Thyroid gland (tissue), 4 donors: ENCODE measurements at regions of chr10 and their contacts with region 1.

Region 1: DNA sequence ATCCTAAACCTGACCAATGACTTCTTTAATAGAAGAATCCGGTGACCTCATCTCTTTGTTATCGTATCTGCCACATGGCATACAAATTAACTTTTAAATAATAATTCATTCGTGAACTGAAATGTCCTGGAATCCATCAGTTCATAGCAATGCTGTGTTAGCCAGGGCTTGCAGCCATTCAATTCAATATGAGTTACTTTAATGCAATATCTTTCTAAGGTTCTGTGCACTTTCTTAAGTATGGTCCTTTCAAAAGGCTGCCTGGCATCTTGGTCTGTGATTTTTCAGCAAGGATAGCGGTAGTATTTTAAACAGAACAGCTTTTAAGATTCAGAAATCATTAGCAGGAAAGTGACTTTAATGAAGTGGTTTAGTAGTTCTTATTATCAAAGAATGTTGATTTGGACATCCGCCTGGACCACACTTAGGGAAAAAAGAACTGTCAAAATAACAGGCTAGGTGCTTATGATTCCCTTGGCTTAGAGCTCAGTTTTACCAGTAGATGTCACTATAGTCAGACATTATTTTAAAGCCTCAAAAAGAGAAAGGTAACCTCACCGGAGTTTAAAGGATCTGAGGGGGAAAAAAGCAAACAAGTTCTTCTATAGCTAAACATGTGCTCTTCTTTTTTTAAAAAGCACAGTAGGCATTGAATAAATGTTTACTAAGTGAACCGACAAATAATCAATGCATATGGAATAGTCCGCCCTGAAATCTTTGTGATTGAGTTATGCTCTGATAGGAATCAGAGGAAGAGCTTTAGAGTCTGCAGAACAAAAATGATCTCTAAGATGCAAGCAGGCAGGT is 22.7 kb downstream of the SLC35G1 start:
- DNase-seq: no peak
- H3K4me3 ChIP-seq: no peak overlapping the region
- H3K27ac ChIP-seq: no peak overlapping the region
- H3K4me1 ChIP-seq: no peaks in the 10 kb centered on the region
- H3K27me3 ChIP-seq: no peaks in the 10 kb centered on the region
- CTCF ChIP-seq: peak in 5 of 6 experiments; percentile 34 to 82 (median 62)
- POLR2A ChIP-seq: no peak

Region 2: DNA sequence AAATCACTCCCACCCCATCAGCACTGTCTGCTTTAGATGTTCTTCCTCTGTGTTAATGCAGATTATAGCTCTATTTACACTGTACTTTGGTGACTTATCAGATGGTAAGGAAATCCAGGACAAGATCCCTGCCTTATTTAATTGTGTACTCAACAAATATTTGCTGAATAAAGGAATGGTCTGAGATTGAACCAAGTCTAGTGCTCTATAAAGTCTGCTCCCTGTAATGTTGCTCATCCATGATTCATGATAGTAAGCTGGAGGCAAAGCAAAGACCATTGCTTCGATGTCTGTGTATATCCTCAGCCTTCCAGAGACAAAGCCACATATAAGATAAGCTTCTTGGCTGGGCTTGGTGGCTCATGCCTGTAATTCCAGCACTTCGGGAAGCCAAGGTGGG is 110.7 kb after region 1 on chr10:
- intact Hi-C with region 1: no loop called
- DNase-seq: no peak
- H3K4me3 ChIP-seq: no peak overlapping the region
- H3K27ac ChIP-seq: no peak overlapping the region
- H3K4me1 ChIP-seq: no peaks in the 10 kb centered on the region
- H3K27me3 ChIP-seq: no peaks in the 10 kb centered on the region
- CTCF ChIP-seq: no peak
- POLR2A ChIP-seq: no peak

Region 3: GRCh38 chr10:94123258-94123995 is 207.0 kb after region 1 on chr10:
- intact Hi-C with region 1: no loop called
- DNase-seq: peak; percentile 5 to 35
- H3K4me3 ChIP-seq: no peak overlapping the region
- H3K27ac ChIP-seq: peak overlapping the region; percentile 10 to 73 (median 44)
- H3K4me1 ChIP-seq: peaks cover 17 to 19% of the 10 kb centered on the region in 2 donors
- H3K27me3 ChIP-seq: no peaks in the 10 kb centered on the region
- CTCF ChIP-seq: no peak
- POLR2A ChIP-seq: no peak

Region 4: DNA sequence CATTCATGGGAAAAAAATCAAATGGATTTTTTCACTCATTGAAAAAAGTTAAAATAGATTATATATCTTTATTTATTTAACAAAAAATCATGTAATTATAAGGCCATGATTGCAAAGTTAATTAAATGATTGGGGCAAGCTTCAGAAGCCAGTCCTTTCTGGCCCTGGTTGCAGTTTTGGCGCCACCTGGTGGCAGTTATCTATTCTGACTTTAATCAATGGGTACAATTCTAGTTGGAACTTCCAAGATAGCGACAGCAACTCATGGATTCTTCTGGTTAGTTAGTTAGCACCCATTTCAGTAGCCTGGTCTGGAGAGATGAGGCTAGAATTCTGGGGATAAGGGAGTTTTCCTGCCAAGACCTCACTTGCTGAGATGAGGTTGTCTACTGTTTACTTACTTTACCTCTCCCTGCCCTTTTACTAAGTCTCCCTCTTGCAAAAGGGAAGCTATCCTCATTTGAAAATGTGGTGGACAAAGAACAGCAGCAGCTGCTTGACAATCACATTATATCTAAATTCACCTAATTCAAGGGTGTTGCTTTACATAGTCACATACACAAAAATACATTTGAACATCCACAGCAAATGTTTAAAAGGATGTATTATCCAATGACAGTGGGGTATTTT is 403.9 kb after region 1 on chr10:
- intact Hi-C with region 1: loop called (anchors 5 kb)
- DNase-seq: peak; percentile 68 to 76
- H3K4me3 ChIP-seq: no peak overlapping the region
- H3K27ac ChIP-seq: no peak overlapping the region
- H3K4me1 ChIP-seq: peaks cover 4 to 15% of the 10 kb centered on the region in 2 donors
- H3K27me3 ChIP-seq: no peaks in the 10 kb centered on the region
- CTCF ChIP-seq: peak; percentile 64 to 91 (median 74)
- POLR2A ChIP-seq: no peak

Region 5: GRCh38 chr10:94443047-94443446 is 526.6 kb after region 1 on chr10:
- intact Hi-C with region 1: loop called (anchors 5 kb)
- DNase-seq: no peak
- H3K4me3 ChIP-seq: no peak overlapping the region
- H3K27ac ChIP-seq: no peak overlapping the region
- H3K4me1 ChIP-seq: no peaks in the 10 kb centered on the region
- H3K27me3 ChIP-seq: no peaks in the 10 kb centered on the region
- CTCF ChIP-seq: no peak
- POLR2A ChIP-seq: no peak